Gastrocnemius medialis (tissue), 4 donors: ENCODE measurements at regions of chrX and their contacts with region 1.

Region 1: DNA sequence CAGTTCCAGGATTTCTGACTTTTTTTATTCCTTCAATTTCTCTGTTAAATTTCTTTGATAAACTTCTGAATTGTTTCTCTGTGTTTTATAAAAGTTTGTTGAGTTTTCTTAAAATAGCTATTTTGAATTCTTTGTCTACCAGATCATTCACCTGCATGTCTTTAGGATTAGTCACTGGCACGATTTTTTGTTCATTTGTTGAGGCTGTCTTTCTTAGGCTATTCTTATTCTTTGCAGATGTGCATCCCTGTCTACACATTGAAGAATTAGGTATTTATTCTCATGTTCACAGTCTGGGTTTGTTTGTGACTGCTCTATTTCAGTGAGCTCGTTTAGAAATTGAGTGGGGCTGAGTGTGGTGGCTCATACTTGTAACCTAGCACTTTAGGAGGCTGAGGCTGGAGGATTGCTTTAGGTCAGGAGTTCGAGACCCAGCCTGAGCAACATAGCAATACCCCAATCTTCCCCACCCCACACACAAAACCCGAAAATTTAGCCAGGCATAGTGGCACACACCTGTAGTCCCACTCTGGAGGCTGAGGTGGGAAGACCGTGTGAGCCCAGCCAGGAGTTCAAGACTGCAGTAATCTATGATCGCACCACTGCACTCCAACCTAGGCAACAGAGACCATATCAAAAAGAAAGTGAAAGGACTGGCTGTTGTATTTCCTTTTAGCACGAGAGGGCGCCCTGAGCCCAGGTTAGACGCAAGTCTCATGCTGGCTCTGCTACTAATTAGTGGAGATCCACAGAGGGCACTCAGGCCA is 42.0 kb downstream of the F8 start:
- DNase-seq: peak; percentile 24 to 67
- ATAC-seq: peak; percentile 88 to 91
- H3K4me3 ChIP-seq: peak overlapping the region; percentile 38 to 48 (median 42)
- H3K27ac ChIP-seq: no peak overlapping the region
- H3K4me1 ChIP-seq: no peaks in the 10 kb centered on the region
- H3K27me3 ChIP-seq: no peaks in the 10 kb centered on the region
- CTCF ChIP-seq: peak; percentile 56 to 77 (median 59)
- POLR2A ChIP-seq: no peak

Region 2: DNA sequence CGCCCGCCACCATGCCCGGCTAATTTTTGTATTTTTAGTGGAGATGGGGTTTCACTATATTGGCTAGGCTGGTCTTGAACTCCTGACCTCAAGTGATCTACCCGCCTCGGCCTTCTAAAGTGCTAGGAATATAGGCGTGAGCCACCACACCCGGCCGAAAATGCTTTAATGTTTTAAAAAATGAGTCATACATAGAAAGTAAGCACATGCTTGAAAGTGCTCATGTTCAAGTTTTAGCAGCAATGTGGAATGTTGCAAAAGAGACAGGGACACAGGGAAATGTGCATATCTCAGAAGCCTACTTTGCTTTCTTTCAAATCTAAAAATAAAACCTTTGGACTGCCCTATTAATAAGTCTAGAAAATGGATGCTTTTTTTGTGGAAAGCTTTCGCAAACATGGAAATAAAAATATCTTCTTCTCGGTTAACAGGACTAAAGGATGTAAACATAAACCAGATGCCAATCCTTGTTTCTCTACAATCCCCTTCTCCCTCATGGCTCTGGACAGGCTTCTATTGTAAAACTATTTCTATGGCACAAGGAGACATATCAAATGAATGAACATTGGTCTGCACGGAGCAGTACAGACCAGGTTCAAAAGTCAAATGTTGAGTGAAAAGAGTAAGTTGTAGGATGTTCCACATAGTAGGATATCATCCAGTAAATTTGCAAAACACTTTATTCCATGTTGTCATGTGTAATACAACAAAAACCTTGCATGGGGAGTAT is 898.0 kb before region 1 on chrX:
- in situ Hi-C with region 1: no loop called
- intact Hi-C with region 1: no loop called
- DNase-seq: no peak
- ATAC-seq: peak in 1 of 2 donors; percentile 30
- H3K4me3 ChIP-seq: no peak overlapping the region
- H3K27ac ChIP-seq: peak overlapping the region; percentile 50 to 61 (median 53)
- H3K4me1 ChIP-seq: peaks cover 16 to 18% of the 10 kb centered on the region in 2 donors
- H3K27me3 ChIP-seq: no peaks in the 10 kb centered on the region
- CTCF ChIP-seq: no peak
- POLR2A ChIP-seq: no peak

Region 3: GRCh38 chrX:154873329-154873728 is 107.2 kb before region 1 on chrX:
- in situ Hi-C with region 1: no loop called
- intact Hi-C with region 1: no loop called
- DNase-seq: no peak
- ATAC-seq: no peak
- H3K4me3 ChIP-seq: no peak overlapping the region
- H3K27ac ChIP-seq: no peak overlapping the region
- H3K4me1 ChIP-seq: no peaks in the 10 kb centered on the region
- H3K27me3 ChIP-seq: no peaks in the 10 kb centered on the region
- CTCF ChIP-seq: no peak
- POLR2A ChIP-seq: no peak

Region 4: GRCh38 chrX:155026726-155027508 is 46.4 kb after region 1 on chrX and contains the start of gene FUNDC2:
- in situ Hi-C with region 1: no loop called
- intact Hi-C with region 1: loop called (anchors 5 kb)
- DNase-seq: peak; percentile 89 to 95
- ATAC-seq: peak; percentile 80 to 83
- H3K4me3 ChIP-seq: peak within 1 kb of the TSS; percentile 61 to 72 (median 64)
- H3K27ac ChIP-seq: peak within 1 kb of the TSS; percentile 88 to 98 (median 94)
- H3K4me1 ChIP-seq: peaks cover 3 to 16% of the 10 kb centered on the region in 2 donors
- H3K27me3 ChIP-seq: no peaks in the 10 kb centered on the region
- CTCF ChIP-seq: no peak
- POLR2A ChIP-seq: peak; percentile 74
- total RNA-seq, gene FUNDC2: 141 to 267 (median 183) TPM

Region 5: GRCh38 chrX:155056877-155057792 is 76.6 kb after region 1 on chrX:
- in situ Hi-C with region 1: loop called in 3 of 4 experiments (anchors 5 to 10 kb)
- intact Hi-C with region 1: loop called (anchors 1 kb)
- DNase-seq: peak; percentile 6 to 57
- ATAC-seq: peak; percentile 95 to 98
- H3K4me3 ChIP-seq: no peak overlapping the region
- H3K27ac ChIP-seq: peak overlapping the region; percentile 17 to 62 (median 47)
- H3K4me1 ChIP-seq: no peaks in the 10 kb centered on the region
- H3K27me3 ChIP-seq: no peaks in the 10 kb centered on the region
- CTCF ChIP-seq: peak; percentile 49 to 76 (median 74)
- POLR2A ChIP-seq: no peak

Region 6: GRCh38 chrX:155070975-155071693 is 90.6 kb after region 1 on chrX and contains the starts of genes BRCC3, CMC4 and MTCP1:
- in situ Hi-C with region 1: loop called in 1 of 4 experiments (anchors 25 kb)
- intact Hi-C with region 1: loop called (anchors 5 kb)
- DNase-seq: peak; percentile 65 to 76
- ATAC-seq: peak; percentile 83 to 88
- H3K4me3 ChIP-seq: peak within 1 kb of the TSS; percentile 59 to 79 (median 74)
- H3K27ac ChIP-seq: peak within 1 kb of the TSS; percentile 87 to 93 (median 88)
- H3K4me1 ChIP-seq: peaks cover 5 to 16% of the 10 kb centered on the region in 2 donors
- H3K27me3 ChIP-seq: no peaks in the 10 kb centered on the region
- CTCF ChIP-seq: peak in 1 of 5 experiments; percentile 7
- POLR2A ChIP-seq: peak; percentile 69 to 76
- total RNA-seq, gene BRCC3: 8.8 to 15.9 (median 10.6) TPM
- total RNA-seq, gene CMC4: 13.0 to 32.1 (median 26.3) TPM
- total RNA-seq, gene MTCP1: 0.31 to 2.2 (median 0.93) TPM in 3 of 4 donors, not detected in the other

Region 7: GRCh38 chrX:155086202-155086840 is 105.8 kb after region 1 on chrX:
- in situ Hi-C with region 1: loop called in 2 of 4 experiments (anchors 10 to 25 kb)
- intact Hi-C with region 1: loop called (anchors 1 kb)
- DNase-seq: peak in 1 of 2 donors; percentile 17
- ATAC-seq: peak in 1 of 2 donors; percentile 46
- H3K4me3 ChIP-seq: no peak overlapping the region
- H3K27ac ChIP-seq: no peak overlapping the region
- H3K4me1 ChIP-seq: no peaks in the 10 kb centered on the region
- H3K27me3 ChIP-seq: no peaks in the 10 kb centered on the region
- CTCF ChIP-seq: peak; percentile 17 to 56 (median 38)
- POLR2A ChIP-seq: no peak

Region 8: GRCh38 chrX:155094468-155095061 is 114.1 kb after region 1 on chrX:
- in situ Hi-C with region 1: loop called in 2 of 4 experiments (anchors 10 to 25 kb)
- intact Hi-C with region 1: no loop called
- DNase-seq: no peak
- ATAC-seq: no peak
- H3K4me3 ChIP-seq: no peak overlapping the region
- H3K27ac ChIP-seq: no peak overlapping the region
- H3K4me1 ChIP-seq: no peaks in the 10 kb centered on the region
- H3K27me3 ChIP-seq: no peaks in the 10 kb centered on the region
- CTCF ChIP-seq: peak; percentile 18 to 61 (median 38)
- POLR2A ChIP-seq: no peak

Region 9: GRCh38 chrX:155216179-155216939 is 235.8 kb after region 1 on chrX and contains the start of gene VBP1:
- in situ Hi-C with region 1: no loop called
- intact Hi-C with region 1: loop called (anchors 10 kb)
- DNase-seq: peak; percentile 89 to 92
- ATAC-seq: peak; percentile 99 to 100
- H3K4me3 ChIP-seq: peak within 1 kb of the TSS; percentile 67 to 87 (median 78)
- H3K27ac ChIP-seq: peak within 1 kb of the TSS; percentile 91 to 97 (median 92)
- H3K4me1 ChIP-seq: peaks cover 7 to 8% of the 10 kb centered on the region in 2 donors
- H3K27me3 ChIP-seq: no peaks in the 10 kb centered on the region
- CTCF ChIP-seq: peak; percentile 12 to 54 (median 34)
- POLR2A ChIP-seq: peak; percentile 24 to 42
- total RNA-seq, gene VBP1: 53.6 to 79.9 (median 72.1) TPM